Activated CD8-positive, alpha-beta memory T cell treated with anti-CD3 and anti-CD28 coated beads, Interleukin-2, amount 10 ng/mL, durations not matched to agents 7 days and 5 days (primary cell): ENCODE measurements at regions of chr7 and their contacts with region 1.

Region 1: GRCh38 chr7:142459551-142459963 is 201.7 kb upstream of the PRSS58 start:
- DNase-seq: no peak
- ATAC-seq: peak; percentile 61
- H3K4me3 Mint-ChIP-seq: no peak overlapping the region
- H3K27ac Mint-ChIP-seq: no peak overlapping the region
- H3K4me1 Mint-ChIP-seq: peaks cover 44% of the 10 kb centered on the region
- H3K27me3 Mint-ChIP-seq: peaks cover 9% of the 10 kb centered on the region

Region 2: DNA sequence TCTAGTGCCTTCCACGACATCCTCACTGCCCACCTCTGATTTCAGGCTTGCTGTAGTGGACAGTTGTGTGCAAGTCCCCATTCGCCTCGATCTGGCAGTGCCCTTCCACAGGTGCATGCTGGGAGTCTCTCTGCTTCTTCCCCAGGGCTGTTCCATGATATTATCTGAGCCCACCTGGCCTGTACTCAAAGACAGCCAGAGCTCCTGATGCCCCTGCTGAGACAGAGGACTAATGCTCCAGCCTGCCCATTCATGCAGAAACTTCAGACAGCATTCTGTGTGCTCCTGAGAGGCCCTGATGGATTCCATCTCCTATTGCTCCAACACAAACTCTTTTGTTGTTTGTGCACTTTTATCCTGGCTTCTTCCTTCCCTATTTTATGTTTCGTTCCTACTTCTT is 36.9 kb before region 1 on chr7:
- CTCF ChIA-PET with region 1: interaction called, 10 read pairs
- DNase-seq: no peak
- ATAC-seq: no peak
- H3K4me3 Mint-ChIP-seq: no peak overlapping the region
- H3K27ac Mint-ChIP-seq: no peak overlapping the region
- H3K4me1 Mint-ChIP-seq: peaks cover 8% of the 10 kb centered on the region
- H3K27me3 Mint-ChIP-seq: peaks cover 3% of the 10 kb centered on the region

Region 3: GRCh38 chr7:142445019-142445686 is 14.4 kb before region 1 on chr7:
- CTCF ChIA-PET with region 1: interaction called, 16 read pairs
- DNase-seq: no peak
- ATAC-seq: peak; percentile 66
- H3K4me3 Mint-ChIP-seq: no peak overlapping the region
- H3K27ac Mint-ChIP-seq: no peak overlapping the region
- H3K4me1 Mint-ChIP-seq: peaks cover 32% of the 10 kb centered on the region
- H3K27me3 Mint-ChIP-seq: peaks cover 10% of the 10 kb centered on the region

Region 4: DNA sequence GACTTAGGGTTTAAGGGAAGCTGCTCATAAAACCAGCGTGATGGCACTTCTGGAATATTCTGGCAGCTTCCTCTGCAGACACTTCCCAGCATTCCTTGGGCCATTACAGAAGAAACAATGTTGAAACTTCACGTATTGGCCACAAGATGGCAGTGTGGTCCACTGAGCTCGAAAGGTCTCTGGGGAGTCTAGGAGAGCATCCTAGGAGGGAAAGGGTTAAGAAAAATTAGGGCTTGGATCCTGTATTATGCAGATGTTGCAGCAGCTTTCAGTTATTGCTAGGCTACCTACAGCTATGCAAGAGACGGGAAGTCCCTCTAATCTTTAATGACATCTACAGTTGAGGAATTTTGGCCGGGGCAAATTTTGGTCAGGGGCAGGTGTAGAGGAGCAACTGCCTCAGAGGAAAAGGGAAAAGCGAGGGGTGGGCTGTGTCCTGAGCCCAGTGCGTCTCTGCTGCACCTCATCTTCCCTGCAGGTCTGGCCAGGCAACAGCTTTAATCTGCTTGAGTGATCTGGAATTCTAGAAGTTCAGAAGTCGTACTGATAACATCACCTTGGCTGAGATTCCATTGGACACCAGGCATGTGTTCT is 19.0 kb after region 1 on chr7:
- CTCF ChIA-PET with region 1: interaction called, 84 read pairs
- DNase-seq: peak; percentile 49
- ATAC-seq: peak; percentile 58
- H3K4me3 Mint-ChIP-seq: no peak overlapping the region
- H3K27ac Mint-ChIP-seq: peak overlapping the region; percentile 24
- H3K4me1 Mint-ChIP-seq: peaks cover 33% of the 10 kb centered on the region
- H3K27me3 Mint-ChIP-seq: no peaks in the 10 kb centered on the region

Region 5: GRCh38 chr7:142496545-142497041 is 37.0 kb after region 1 on chr7:
- CTCF ChIA-PET with region 1: interaction called, 15 read pairs
- DNase-seq: no peak
- ATAC-seq: peak; percentile 48
- H3K4me3 Mint-ChIP-seq: peak overlapping the region; percentile 7
- H3K27ac Mint-ChIP-seq: no peak overlapping the region
- H3K4me1 Mint-ChIP-seq: peaks cover 23% of the 10 kb centered on the region
- H3K27me3 Mint-ChIP-seq: peaks cover 3% of the 10 kb centered on the region